GM10248 (cell line): ENCODE measurements at regions of chr5 and their contacts with region 1.

Region 1: GRCh38 chr5:61352612-61353156 is 20.6 kb downstream of the ZSWIM6 start:
- DNase-seq: no peak
- CTCF ChIP-seq: no peak

Region 2: DNA sequence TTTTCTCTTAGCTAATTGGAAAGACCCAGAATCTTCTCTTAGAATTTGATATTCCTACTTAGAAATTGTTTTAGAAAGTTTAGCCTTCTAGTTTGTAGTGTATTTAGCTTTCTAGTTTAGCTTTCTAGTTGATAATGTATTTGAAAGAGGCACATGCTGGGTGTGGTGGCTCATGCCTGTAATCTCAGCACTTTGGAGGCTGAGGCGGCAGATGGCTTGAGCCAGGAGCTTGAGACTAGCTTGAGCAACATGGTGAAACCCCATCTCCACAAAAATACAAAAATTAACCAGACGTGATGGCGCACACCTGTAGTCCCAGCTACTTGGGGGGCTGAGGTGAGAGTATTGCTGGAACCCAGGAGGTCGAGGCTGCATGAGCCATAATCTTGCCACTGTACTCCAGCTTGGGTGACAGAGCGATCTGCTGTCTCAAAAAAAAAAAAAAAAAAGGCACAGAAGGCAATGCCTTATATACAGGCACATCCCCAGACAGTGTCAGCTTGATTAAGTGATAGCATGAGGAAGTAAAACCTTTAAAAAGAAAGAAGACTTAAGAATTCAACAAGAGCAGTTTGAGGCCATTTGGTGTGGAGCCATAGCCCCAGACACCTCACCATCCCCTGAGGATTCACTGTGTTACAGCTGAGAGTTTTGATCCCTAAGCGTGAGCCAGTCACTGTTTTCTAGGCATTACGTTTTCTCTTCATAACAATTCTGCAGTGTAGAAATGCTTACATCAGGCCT is 14.0 kb after region 1 on chr5:
- CTCF ChIA-PET with region 1: interaction called, 12 read pairs
- POLR2A ChIA-PET with region 1: no interaction called
- DNase-seq: no peak
- CTCF ChIP-seq: no peak